H1 (cell line): ENCODE measurements at regions of chr11 and their contacts with region 1.

Region 1: DNA sequence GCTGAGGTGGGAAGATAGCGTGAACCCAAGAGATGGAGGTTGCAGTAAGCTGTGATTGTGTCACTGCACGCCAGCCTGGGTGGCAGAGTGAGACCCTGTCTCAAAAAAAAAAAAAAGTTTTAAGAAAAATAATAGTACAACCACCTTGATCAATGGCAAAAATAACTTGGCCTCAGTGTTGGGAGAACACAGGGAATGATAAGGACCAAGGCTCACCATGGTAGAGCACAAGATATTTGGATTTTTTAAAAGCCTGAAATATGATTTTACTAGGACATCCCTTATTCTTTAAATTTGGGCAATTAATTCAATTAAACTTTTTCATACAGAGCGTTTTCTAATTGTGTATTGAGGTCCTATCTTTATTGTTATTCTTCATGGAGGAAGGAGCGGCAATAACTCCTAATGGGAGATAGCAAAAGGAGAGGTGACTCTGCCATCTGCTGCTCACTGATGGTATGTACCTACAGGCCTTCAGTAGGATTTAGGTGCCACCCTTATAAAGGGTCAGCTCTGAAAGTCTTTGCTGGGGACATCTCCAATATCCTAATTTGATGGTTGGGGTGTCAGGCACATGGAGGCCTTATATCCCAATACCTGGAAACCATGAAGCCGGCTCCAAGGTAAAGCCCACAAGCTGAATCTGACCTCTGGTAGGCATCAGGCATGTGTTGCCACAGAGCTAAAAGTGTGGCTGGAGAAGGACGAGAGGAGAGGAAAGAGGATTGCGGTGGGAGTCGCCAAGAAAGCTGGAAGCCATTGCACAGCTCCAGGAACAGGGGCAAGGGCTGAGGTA is 21.9 kb upstream of the POLD3 start:
- DNase-seq: peak in 1 of 2 experiments; percentile 50
- H3K4me3 ChIP-seq: no peak overlapping the region
- H3K27ac ChIP-seq: no peak overlapping the region
- H3K4me1 ChIP-seq: no peaks in the 10 kb centered on the region
- H3K27me3 ChIP-seq: no peaks in the 10 kb centered on the region
- CTCF ChIP-seq: peak; percentile 13 to 81 (median 73)
- EP300 ChIP-seq: no peak
- POLR2A ChIP-seq: no peak
- RAD21 ChIP-seq: peak; percentile 90 to 93

Region 2: GRCh38 chr11:74255741-74256369 is 314.6 kb before region 1 on chr11:
- CTCF ChIA-PET with region 1: interaction called, 14 read pairs
- POLR2A ChIA-PET with region 1: no interaction called
- DNase-seq: peak; percentile 17 to 54
- H3K4me3 ChIP-seq: no peak overlapping the region
- H3K27ac ChIP-seq: no peak overlapping the region
- H3K4me1 ChIP-seq: no peaks in the 10 kb centered on the region
- H3K27me3 ChIP-seq: no peaks in the 10 kb centered on the region
- CTCF ChIP-seq: peak; percentile 70 to 87 (median 83)
- EP300 ChIP-seq: no peak
- POLR2A ChIP-seq: no peak
- RAD21 ChIP-seq: peak; percentile 88 to 90

Region 3: DNA sequence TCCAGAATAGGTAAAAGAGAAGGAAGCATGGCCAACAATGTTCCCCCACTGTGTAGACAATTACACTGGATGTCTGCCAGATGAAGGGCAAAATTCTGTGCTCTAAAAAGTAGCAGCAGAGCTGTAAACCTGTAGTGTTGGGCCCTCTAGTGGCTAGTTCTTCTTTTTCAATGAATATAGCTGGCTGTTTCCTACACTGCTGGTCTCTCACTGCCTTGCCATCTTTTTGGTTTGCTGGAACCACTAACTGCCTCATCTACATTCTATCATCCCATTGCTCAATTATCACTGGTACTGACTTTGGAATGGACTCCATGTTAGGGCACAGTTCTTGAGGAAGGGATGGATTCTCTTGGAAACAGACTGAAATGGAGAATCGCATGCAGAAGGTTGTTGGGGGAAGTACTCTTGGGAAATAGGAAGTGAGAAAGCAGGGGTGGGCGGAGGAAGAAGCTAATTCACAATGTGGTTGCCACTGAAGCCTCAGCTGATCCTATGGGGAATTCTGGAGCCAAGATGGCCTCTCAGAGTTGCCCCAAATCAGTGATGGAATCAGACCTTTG is 121.0 kb before region 1 on chr11:
- CTCF ChIA-PET with region 1: interaction called, 291 read pairs
- POLR2A ChIA-PET with region 1: interaction called, 8 read pairs
- DNase-seq: no peak
- H3K4me3 ChIP-seq: no peak overlapping the region
- H3K27ac ChIP-seq: no peak overlapping the region
- H3K4me1 ChIP-seq: peaks cover 0 to 2% (median 1%) of the 10 kb centered on the region in 4 experiments; a peak in 2 of 7 replicates
- H3K27me3 ChIP-seq: no peaks in the 10 kb centered on the region
- CTCF ChIP-seq: peak in 2 of 3 experiments; percentile 79 to 81; a peak in 3 of 4 replicates
- EP300 ChIP-seq: no peak
- POLR2A ChIP-seq: no peak
- RAD21 ChIP-seq: peak; percentile 88 to 91

Region 4: DNA sequence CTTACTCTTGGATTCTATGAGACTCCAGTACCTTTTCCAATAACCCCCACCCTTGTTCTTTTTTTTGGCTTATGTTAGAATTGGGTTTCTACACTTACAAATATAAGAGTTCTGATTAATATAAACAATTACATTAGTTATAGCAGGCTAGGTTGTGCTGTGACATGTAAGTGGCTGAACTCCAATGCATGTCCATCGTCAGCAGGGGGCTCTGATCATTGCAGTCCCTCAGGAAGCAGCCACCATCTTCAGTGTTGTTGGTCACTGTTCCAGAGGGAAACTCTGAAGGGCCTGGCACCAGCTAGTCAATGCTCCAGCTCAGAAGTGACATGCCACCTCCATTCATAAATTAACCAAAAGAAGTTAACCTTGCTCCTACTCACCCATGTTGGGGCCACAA is 82.6 kb before region 1 on chr11:
- CTCF ChIA-PET with region 1: interaction called, 27 read pairs
- POLR2A ChIA-PET with region 1: no interaction called
- DNase-seq: no peak
- H3K4me3 ChIP-seq: no peak overlapping the region
- H3K27ac ChIP-seq: no peak overlapping the region
- H3K4me1 ChIP-seq: peaks cover 0 to 4% (median 1%) of the 10 kb centered on the region in 4 experiments; a peak in 2 of 7 replicates
- H3K27me3 ChIP-seq: no peaks in the 10 kb centered on the region
- CTCF ChIP-seq: peak; percentile 29 to 43 (median 42)
- EP300 ChIP-seq: no peak
- POLR2A ChIP-seq: no peak
- RAD21 ChIP-seq: peak; percentile 15 to 44; a peak in 2 of 4 replicates

Region 5: GRCh38 chr11:74550991-74551753 is 19.3 kb before region 1 on chr11:
- CTCF ChIA-PET with region 1: interaction called, 16 read pairs
- POLR2A ChIA-PET with region 1: no interaction called
- DNase-seq: no peak
- H3K4me3 ChIP-seq: no peak overlapping the region
- H3K27ac ChIP-seq: no peak overlapping the region
- H3K4me1 ChIP-seq: peaks cover 0 to 2% (median 0%) of the 10 kb centered on the region in 4 experiments; a peak in 2 of 7 replicates
- H3K27me3 ChIP-seq: no peaks in the 10 kb centered on the region
- CTCF ChIP-seq: no peak
- EP300 ChIP-seq: no peak
- POLR2A ChIP-seq: no peak
- RAD21 ChIP-seq: no peak

Region 6: DNA sequence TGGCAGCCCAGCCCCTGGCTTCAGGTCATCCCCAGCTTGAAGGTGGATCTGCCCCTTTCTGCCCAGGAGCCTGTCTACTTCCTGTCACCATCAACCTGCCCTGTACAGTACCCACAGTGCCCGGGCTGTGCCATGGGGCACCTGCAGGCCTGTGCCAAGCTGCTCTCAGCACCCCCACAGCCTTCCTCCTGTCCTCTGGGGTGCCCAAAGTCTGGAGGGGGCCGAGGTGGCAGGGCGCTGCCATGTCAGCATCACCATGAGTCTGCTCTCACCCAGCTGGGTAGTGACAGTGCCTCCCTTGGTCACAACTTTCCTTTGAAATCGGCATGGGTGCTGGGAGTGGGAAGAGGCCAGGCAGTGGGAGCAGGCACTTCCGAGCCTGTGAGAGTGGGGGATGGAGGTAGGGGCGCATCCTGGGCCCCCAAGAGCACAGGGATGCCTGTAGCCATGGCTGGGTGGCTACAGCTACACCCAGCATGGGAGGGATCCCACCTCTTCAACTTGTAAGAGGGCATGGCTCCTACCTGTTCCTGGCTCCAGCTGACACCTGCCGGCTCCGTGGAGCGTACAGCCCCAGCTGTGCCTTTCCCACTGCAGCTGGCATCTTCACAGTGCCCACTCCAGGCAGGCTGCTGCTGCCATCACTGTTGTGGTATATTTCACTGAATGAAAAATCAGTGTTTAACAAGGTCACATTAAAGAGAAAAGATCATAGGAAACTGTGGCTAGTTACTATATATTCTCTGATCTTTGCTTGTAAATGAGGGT is 221.1 kb after region 1 on chr11:
- CTCF ChIA-PET with region 1: no interaction called
- POLR2A ChIA-PET with region 1: no interaction called
- DNase-seq: no peak
- H3K4me3 ChIP-seq: no peak overlapping the region
- H3K27ac ChIP-seq: no peak overlapping the region
- H3K4me1 ChIP-seq: no peaks in the 10 kb centered on the region
- H3K27me3 ChIP-seq: peaks cover 0 to 1% (median 0%) of the 10 kb centered on the region in 4 experiments; a peak in 1 of 7 replicates
- CTCF ChIP-seq: no peak
- EP300 ChIP-seq: no peak
- POLR2A ChIP-seq: no peak
- RAD21 ChIP-seq: no peak